Breast epithelium (tissue), 4 donors: ENCODE measurements at regions of chr7 and their contacts with region 1.

Region 1: DNA sequence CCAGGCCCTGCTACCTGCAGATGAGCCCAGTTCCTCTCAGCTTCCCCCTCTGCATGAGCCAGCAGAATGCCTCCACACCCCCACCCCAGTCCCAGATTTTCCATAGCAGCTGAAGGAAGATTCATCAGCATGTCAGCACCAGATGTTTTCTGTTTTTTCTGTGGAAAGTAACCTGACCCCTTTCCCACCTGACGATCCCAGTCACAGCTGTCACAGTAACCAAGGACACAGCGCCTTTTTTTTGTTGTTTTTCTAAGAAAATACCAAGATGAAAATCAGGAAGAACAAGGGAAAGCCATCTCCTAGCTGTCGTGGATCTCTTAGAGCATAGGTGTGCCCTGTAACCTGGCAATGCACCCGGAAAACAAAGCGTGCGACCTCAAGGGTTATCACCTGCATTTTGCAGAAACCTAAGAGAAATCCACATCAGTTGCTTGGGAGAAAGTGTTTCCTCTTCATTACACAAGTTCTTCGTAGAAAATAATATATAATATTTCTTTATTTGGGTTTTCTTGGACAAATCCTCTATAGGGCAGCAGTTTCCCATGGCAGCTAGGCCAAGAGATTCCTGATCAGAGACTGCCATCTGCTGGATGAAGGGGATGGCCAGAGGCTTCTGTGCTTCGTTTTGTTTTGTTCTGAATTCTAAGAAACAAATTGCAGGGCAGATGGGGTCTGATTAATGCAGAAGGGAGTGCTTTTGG is 401.9 kb downstream of the TNS3 start:
- DNase-seq: no peak
- H3K4me3 ChIP-seq: no peak overlapping the region
- H3K27ac ChIP-seq: no peak overlapping the region
- H3K4me1 ChIP-seq: peaks cover 0 to 7% of the 10 kb centered on the region in 2 donors
- H3K27me3 ChIP-seq: no peaks in the 10 kb centered on the region
- CTCF ChIP-seq: peak; percentile 27 to 58 (median 51)
- POLR2A ChIP-seq: no peak

Region 2: DNA sequence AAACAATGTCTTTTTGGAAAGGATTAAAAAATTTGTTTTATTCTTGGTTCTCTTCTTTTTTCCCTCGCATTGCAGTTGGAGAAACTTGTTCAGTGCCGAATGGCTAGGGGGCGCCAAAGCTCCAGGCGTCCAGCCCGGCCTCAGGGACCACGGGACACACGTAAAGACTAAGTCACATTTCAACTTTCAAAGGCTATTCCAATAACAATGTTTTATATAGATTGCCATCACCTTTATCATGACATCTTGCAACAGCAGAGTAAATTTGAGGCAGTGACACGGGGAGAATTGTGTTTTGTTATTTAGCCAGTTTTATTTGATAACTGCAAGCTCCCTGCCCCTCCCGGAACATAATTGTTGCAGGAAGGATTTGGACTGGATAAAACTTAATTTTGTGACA is 1256.7 kb before region 1 on chr7:
- intact Hi-C with region 1: loop called (anchors 5 kb)
- DNase-seq: peak in 1 of 2 donors; percentile 75
- H3K4me3 ChIP-seq: peak overlapping the region in 2 of 3 donors; percentile 61 to 72
- H3K27ac ChIP-seq: no peak overlapping the region
- H3K4me1 ChIP-seq: peaks cover 0 to 7% of the 10 kb centered on the region in 2 donors
- H3K27me3 ChIP-seq: no peaks in the 10 kb centered on the region
- CTCF ChIP-seq: peak; percentile 27 to 83 (median 77)
- POLR2A ChIP-seq: no peak